Activated CD4-positive, alpha-beta T cell treated with anti-CD3 and anti-CD28 coated beads, Interleukin-2, amount 10 ng/mL, durations not matched to agents 24 days and 14 days (primary cell): ENCODE measurements at regions of chr19 and their contacts with region 1.

Region 1: GRCh38 chr19:50003810-50004419 is 21.3 kb downstream of the VRK3 start:
- DNase-seq: peak; percentile 72
- H3K4me3 Mint-ChIP-seq: peak overlapping the region; percentile 68
- H3K27ac Mint-ChIP-seq: peak overlapping the region; percentile 48
- H3K4me1 Mint-ChIP-seq: peaks cover 33% of the 10 kb centered on the region
- H3K27me3 Mint-ChIP-seq: no peaks in the 10 kb centered on the region

Region 2: GRCh38 chr19:49983645-49984229 is 20.2 kb before region 1 on chr19:
- intact Hi-C with region 1: loop called (anchors 2 kb)
- DNase-seq: peak; percentile 93
- H3K4me3 Mint-ChIP-seq: no peak overlapping the region
- H3K27ac Mint-ChIP-seq: no peak overlapping the region
- H3K4me1 Mint-ChIP-seq: peaks cover 9% of the 10 kb centered on the region
- H3K27me3 Mint-ChIP-seq: no peaks in the 10 kb centered on the region

Region 3: GRCh38 chr19:50025024-50025789 is 21.3 kb after region 1 on chr19 and contains the start of gene VRK3:
- intact Hi-C with region 1: loop called (anchors 1 kb)
- DNase-seq: peak; percentile 100
- H3K4me3 Mint-ChIP-seq: peak within 1 kb of the TSS; percentile 95
- H3K27ac Mint-ChIP-seq: peak within 1 kb of the TSS; percentile 99
- H3K4me1 Mint-ChIP-seq: peaks cover 34% of the 10 kb centered on the region
- H3K27me3 Mint-ChIP-seq: peaks cover 2% of the 10 kb centered on the region
- total RNA-seq, gene VRK3: 66.1 and 70.0 TPM in 2 replicates